ENCODE measurements at regions of chr11 and their contacts with region 1.

Region 1: GRCh38 chr11:19951558-19952115 is 208.6 kb downstream of the DBX1 start:
- DNase-seq: peak; percentile 76
- H3K4me3 Mint-ChIP-seq: peak overlapping the region; percentile 28
- H3K27ac Mint-ChIP-seq: peak overlapping the region; percentile 64
- H3K4me1 Mint-ChIP-seq: peaks cover 41% of the 10 kb centered on the region
- H3K27me3 Mint-ChIP-seq: no peaks in the 10 kb centered on the region
- CTCF ChIP-seq: peak; percentile 60

Region 2: GRCh38 chr11:19962801-19963175 is 11.2 kb after region 1 on chr11:
- CTCF ChIA-PET with region 1: interaction called, 14 read pairs
- POLR2A ChIA-PET with region 1: no interaction called
- intact Hi-C with region 1: no loop called
- DNase-seq: no peak
- H3K4me3 Mint-ChIP-seq: no peak overlapping the region
- H3K27ac Mint-ChIP-seq: peak overlapping the region; percentile 61
- H3K4me1 Mint-ChIP-seq: peaks cover 25% of the 10 kb centered on the region
- H3K27me3 Mint-ChIP-seq: no peaks in the 10 kb centered on the region
- CTCF ChIP-seq: no peak

Region 3: DNA sequence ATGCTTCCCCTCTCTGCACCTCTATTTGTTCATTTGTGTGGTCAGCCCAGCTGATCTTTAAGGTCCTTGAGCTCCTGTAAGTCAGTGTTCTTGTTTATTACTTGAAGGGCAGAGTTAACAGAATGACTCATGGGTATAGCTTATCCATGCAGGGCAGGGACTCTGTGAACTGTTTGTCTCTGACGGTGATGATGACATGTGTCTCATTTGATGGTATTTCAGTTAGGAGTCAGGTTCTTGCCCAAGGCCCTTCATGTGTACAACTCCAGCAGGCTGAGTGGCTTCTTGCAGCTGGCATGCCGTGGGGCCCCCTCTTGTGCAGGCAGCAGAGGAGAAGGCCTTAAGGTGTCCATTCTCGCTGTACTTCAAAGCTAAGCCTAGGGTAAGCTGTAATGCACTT is 43.5 kb after region 1 on chr11:
- CTCF ChIA-PET with region 1: interaction called, 11 read pairs
- POLR2A ChIA-PET with region 1: interaction called, 17 read pairs
- intact Hi-C with region 1: no loop called
- DNase-seq: peak; percentile 95
- H3K4me3 Mint-ChIP-seq: peak overlapping the region; percentile 73
- H3K27ac Mint-ChIP-seq: peak overlapping the region; percentile 99
- H3K4me1 Mint-ChIP-seq: peaks cover 36% of the 10 kb centered on the region
- H3K27me3 Mint-ChIP-seq: no peaks in the 10 kb centered on the region
- CTCF ChIP-seq: no peak

Region 4: DNA sequence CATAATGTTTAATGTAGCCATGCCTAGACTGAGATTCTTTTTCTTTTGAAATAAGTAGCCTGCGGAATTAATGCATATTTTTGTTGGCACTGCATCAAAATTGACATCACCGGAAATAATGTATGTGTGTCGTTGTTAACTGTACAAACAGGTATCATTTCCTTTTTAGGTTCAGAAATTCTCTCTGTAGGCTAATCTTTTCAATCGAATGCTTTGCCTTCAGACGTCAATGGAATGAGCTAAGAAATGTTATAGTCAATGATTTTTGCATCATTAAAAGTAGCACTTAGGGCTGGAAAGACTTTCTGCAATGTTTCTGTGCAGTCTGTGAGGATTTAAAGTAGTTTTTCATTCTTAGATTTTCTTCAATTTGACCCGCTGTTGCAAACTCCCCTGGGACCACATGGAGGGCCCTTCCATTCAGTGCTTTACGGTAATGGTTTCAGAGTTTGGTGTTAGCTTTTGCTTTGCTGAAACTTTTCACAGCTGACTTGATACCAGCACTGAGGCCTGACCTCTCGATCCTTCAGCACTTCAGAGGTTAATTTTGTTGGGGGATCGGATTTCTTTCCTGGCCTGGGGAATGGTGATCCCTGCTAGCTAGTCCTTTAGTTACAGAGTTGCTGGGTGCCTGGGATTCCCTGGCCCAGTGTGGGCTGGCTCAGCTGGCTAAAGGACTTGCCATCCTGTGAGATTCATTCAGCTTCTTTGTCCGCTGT is 70.9 kb after region 1 on chr11:
- CTCF ChIA-PET with region 1: interaction called, 100 read pairs
- POLR2A ChIA-PET with region 1: interaction called, 69 read pairs
- intact Hi-C with region 1: loop called (anchors 1 kb)
- DNase-seq: peak; percentile 77
- H3K4me3 Mint-ChIP-seq: peak overlapping the region; percentile 79
- H3K27ac Mint-ChIP-seq: peak overlapping the region; percentile 85
- H3K4me1 Mint-ChIP-seq: peaks cover 19% of the 10 kb centered on the region
- H3K27me3 Mint-ChIP-seq: no peaks in the 10 kb centered on the region
- CTCF ChIP-seq: no peak

Region 5: DNA sequence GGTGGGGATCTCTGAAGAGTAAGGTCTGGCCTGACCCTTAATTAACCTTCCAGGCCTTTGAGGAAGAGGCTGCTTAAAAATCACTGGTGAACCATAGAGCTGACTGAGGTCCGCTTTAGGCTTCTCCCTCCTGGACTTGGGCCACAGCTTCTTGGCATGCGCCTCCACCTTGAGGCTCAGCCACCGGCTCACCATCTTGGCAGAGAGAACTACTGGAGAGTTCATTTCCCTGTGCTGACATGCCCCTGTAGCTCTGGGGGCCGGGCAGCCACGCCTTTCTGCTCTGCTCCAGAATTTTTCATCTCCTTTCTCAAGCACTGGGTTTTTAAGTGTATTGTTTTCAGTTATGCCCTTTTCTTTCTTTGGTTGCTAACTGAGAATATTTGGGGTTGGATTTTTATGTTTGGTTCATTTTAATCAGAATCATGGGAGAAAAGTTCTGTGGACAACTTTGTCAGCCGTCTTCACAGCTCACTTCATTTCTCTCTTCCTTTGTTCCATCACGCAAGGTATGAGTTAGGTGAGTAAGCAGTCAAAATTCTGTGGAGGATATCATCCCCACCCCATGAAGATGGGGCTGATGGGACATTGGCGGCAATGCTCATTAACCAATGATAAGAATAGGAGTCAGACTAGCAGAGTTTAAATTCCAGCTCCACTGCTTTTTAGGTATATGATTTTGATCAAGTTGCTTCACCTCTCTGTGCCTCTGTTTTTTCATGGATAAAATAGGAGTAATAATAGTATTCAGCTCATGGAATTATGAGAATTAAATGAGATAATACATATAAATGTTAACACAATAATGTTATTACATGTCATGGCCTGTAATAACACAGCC is 104.7 kb after region 1 on chr11:
- CTCF ChIA-PET with region 1: interaction called, 11 read pairs
- POLR2A ChIA-PET with region 1: interaction called, 45 read pairs
- intact Hi-C with region 1: loop called (anchors 1 kb)
- DNase-seq: peak; percentile 92
- H3K4me3 Mint-ChIP-seq: peak overlapping the region; percentile 26
- H3K27ac Mint-ChIP-seq: peak overlapping the region; percentile 90
- H3K4me1 Mint-ChIP-seq: peaks cover 67% of the 10 kb centered on the region
- H3K27me3 Mint-ChIP-seq: no peaks in the 10 kb centered on the region
- CTCF ChIP-seq: no peak

Region 6: DNA sequence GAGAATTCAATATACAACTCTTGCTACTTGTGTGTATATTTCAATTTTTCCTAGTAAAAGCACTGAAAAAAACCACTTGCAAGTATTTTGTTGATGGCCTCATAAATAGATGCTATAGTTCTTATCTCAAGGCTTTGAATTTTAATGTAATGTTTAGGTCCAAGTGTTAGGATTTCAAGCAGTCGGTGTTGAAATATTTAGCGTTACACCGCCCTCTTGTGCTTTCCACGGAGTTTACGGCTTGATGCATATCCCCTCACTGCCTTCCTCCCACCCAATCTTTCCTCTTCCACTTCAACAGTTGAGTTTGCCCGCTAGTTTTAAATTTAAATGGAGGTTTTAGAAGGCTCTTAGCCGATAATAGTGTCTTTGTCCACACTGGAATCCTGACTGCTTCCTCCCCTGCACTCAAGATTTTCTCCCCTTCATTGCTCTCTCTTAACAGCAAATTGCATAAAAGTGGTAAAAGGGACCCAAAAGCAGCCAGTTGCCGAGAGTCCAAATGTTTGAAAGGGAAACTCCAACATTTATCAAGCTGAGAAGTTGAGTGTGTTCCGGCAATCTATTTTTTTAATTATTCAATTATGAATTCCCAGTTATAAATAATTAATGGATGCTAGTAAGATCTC is 386.0 kb after region 1 on chr11:
- CTCF ChIA-PET with region 1: interaction called, 3 read pairs
- POLR2A ChIA-PET with region 1: no interaction called
- intact Hi-C with region 1: loop called (anchors 5 kb)
- DNase-seq: peak; percentile 46
- H3K4me3 Mint-ChIP-seq: no peak overlapping the region
- H3K27ac Mint-ChIP-seq: no peak overlapping the region
- H3K4me1 Mint-ChIP-seq: no peaks in the 10 kb centered on the region
- H3K27me3 Mint-ChIP-seq: peaks cover 97% of the 10 kb centered on the region
- CTCF ChIP-seq: peak; percentile 42

Measured in MCF 10A (cell line).